ENCODE measurements at regions of chr7 and their contacts with region 1.

Region 1: DNA sequence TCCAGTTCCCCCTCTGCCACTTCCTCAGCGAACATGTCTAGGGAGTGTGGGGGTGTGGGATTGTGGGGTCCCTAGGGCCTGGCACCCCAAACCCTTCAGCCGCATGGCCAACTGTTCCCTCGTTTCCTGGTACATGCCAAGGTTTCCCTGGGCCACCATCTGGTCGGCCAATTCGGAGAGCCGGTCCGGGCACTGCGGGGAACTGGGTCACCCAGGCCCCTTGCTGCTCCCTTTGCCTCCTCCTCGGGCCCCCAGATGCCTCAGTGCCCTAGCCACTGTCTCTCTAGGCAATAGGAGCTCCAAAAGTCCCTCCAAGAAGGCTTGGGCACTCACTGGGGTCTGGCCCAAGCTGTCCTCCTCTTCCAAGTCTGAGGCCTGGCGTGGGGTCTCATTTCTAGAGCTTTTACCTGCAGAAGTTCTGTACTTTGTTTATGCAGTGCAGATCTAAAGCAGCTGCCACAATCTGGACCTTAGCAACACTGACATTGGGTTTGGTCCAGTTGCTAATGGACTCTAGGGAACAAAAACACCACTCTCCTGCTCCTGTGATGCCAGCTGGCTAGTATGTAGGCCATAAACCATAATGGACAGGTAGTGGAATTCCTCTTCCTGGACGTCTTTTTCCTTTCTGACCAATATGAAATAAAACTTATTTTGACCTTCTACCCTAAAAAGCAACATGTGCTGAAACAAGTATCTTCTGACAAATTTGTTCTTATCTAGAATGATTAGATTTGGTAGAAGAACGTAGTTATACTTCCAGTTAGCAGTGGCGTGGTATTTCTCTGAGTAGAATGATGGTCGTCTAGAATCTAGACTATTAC is 172.9 kb downstream of the LRRC4 start:
- DNase-seq: no peak
- H3K4me3 Mint-ChIP-seq: peak overlapping the region; percentile 30
- H3K27ac Mint-ChIP-seq: peak overlapping the region; percentile 52
- H3K4me1 Mint-ChIP-seq: peaks cover 67% of the 10 kb centered on the region
- H3K27me3 Mint-ChIP-seq: peaks cover 5% of the 10 kb centered on the region

Region 2: GRCh38 chr7:127383123-127383835 is 475.0 kb before region 1 on chr7:
- intact Hi-C with region 1: no loop called
- DNase-seq: no peak
- H3K4me3 Mint-ChIP-seq: no peak overlapping the region
- H3K27ac Mint-ChIP-seq: no peak overlapping the region
- H3K4me1 Mint-ChIP-seq: peaks cover 68% of the 10 kb centered on the region
- H3K27me3 Mint-ChIP-seq: no peaks in the 10 kb centered on the region

Region 3: DNA sequence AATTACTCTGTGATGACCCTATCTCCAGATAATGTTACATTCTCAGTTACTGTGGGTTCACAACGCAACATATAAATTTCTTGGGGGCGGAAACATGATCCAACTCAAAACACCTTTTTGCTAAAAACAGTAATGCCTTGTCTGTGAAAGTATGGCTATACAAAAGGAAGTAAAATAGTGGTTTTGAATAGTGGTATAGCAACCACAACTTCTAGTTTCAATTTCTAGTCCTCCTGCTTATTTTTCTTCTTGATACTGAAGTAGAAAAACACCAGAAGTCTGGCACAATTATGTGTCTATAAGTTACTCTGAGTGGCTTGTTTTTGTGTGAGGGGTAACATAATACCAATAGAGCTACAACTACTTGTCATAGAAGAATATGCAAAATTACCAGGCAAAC is 444.3 kb before region 1 on chr7:
- intact Hi-C with region 1: loop called (anchors 10 kb)
- DNase-seq: no peak
- H3K4me3 Mint-ChIP-seq: peak overlapping the region; percentile 62
- H3K27ac Mint-ChIP-seq: peak overlapping the region; percentile 66
- H3K4me1 Mint-ChIP-seq: peaks cover 54% of the 10 kb centered on the region
- H3K27me3 Mint-ChIP-seq: peaks cover 20% of the 10 kb centered on the region

Region 4: GRCh38 chr7:127876393-127876792 is 18.1 kb after region 1 on chr7:
- intact Hi-C with region 1: loop called (anchors 1 kb)
- DNase-seq: no peak
- H3K4me3 Mint-ChIP-seq: no peak overlapping the region
- H3K27ac Mint-ChIP-seq: no peak overlapping the region
- H3K4me1 Mint-ChIP-seq: peaks cover 15% of the 10 kb centered on the region
- H3K27me3 Mint-ChIP-seq: no peaks in the 10 kb centered on the region

Region 5: DNA sequence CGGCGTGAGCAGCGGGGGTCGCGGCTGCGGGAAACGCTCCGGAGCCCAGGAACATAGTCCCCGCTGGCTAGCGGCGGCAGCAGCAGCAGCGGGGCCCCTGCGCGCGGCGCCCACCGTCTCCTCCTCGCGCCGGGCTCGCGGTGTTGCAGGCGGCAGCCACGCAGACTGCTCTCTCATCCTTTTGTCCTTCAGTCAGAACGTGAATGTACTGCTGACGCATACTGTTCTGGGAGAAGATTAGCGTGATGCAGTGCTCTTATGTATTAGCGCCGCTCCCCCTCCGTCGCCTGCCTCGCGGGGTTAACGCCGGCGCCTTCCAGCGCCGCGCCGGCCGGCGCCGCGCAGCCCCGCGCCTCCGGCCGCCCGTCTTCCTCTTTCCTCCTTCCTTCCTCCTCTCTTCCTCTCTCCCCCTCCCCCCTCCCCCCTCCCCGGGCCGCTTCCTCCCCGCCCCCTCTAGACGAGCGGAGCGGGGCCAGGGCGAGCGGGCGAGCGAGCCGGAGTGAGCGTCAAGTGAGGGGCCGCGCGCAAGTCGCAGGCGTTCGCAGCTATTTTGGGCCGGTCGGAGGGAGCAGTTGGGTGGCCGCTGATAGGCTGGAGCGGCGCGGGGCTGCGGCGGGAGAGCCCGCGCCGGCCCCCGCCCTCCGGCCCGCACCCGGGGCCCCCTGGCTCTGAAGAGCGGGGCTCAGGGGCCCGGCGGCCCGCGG is 173.8 kb after region 1 on chr7:
- intact Hi-C with region 1: loop called (anchors 2 kb)
- DNase-seq: peak; percentile 20
- H3K4me3 Mint-ChIP-seq: peak overlapping the region; percentile 83
- H3K27ac Mint-ChIP-seq: no peak overlapping the region
- H3K4me1 Mint-ChIP-seq: no peaks in the 10 kb centered on the region
- H3K27me3 Mint-ChIP-seq: peaks cover 23% of the 10 kb centered on the region

Region 6: GRCh38 chr7:129530795-129531391 is 1672.6 kb after region 1 on chr7:
- intact Hi-C with region 1: loop called (anchors 5 kb)
- DNase-seq: peak; percentile 8
- H3K4me3 Mint-ChIP-seq: no peak overlapping the region
- H3K27ac Mint-ChIP-seq: peak overlapping the region; percentile 79
- H3K4me1 Mint-ChIP-seq: peaks cover 12% of the 10 kb centered on the region
- H3K27me3 Mint-ChIP-seq: no peaks in the 10 kb centered on the region

Measured in activated T-helper 1 cell treated with anti-CD3 and anti-CD28 coated beads, Interleukin-12 subunit alpha, Interleukin-12 subunit beta, Interleukin-2, Interleukin-4 antibody, amounts not matched to agents 30 ng/mL and 10 ng/mL and 1 ng/mL, durations not matched to agents 14 hours and 24 hours and 36 hours (primary cell).